Activated CD4-positive, alpha-beta memory T cell treated with anti-CD3 and anti-CD28 coated beads for 36 hours (primary cell): ENCODE measurements at regions of chr18 and their contacts with region 1.

Region 1: DNA sequence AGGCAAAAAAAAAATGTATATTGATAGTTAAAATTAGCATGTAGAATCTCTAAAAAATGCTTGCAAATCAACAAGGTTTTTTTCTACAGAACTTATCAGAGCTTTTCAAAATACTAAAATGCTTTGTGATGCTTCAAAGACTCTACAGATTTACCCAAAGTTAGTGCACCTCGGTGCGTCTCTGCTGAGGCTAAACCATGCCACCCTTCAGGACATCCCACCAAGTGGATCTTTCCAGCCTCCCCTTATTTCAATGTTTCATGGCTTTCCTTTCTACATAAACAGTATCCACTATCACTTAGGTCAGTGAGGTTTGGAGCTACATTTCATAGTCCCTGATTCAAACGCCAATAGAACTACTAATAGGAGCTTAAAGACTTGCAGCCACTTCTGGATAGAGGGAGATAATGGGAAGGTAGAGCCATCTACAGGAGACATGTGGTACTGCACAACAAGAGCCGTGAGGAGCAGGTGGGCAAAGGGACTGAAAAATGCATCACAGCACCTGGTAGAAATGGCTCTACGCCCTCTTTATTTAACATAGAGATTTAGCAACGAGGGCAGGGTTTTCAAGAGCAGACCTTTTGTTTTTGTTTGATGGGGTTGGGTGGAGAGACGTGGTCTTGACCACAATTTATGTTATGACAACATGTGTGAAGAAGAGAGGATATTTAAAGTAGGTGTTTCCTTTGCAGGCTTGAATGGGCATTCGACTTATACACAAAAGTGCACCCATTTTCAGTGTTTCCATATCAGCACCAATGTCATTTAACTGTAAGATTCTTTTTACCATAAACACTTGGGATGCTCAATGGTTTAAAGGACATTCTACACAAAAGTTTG is 56.1 kb upstream of the SLC35G4 start:
- DNase-seq: peak; percentile 36
- H3K4me3 Mint-ChIP-seq: no peak overlapping the region
- H3K27ac Mint-ChIP-seq: no peak overlapping the region
- H3K4me1 Mint-ChIP-seq: peaks cover 3% of the 10 kb centered on the region
- H3K27me3 Mint-ChIP-seq: peaks cover 4% of the 10 kb centered on the region

Region 2: DNA sequence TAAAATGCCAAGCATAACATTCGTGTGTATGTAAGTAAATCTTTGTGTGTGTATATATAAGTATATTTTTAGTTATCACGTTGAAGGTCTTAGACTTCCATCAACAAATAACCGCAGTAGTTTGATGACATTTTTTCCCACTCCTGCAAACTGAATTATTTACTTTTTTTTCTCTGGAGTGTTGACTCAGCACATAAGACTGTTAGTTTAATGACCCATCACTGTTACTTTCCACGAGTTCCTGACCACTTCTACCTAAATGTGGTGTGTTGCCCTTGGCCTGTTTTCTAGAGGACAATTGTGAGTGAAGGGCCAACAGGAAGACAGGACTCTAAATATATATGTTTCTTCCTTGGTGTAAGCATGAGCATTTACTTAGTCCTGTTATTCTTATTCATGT is 1738.9 kb before region 1 on chr18:
- CTCF ChIA-PET with region 1: no interaction called
- POLR2A ChIA-PET with region 1: no interaction called
- intact Hi-C with region 1: no loop called
- DNase-seq: no peak
- H3K4me3 Mint-ChIP-seq: no peak overlapping the region
- H3K27ac Mint-ChIP-seq: no peak overlapping the region
- H3K4me1 Mint-ChIP-seq: no peaks in the 10 kb centered on the region
- H3K27me3 Mint-ChIP-seq: peaks cover 13% of the 10 kb centered on the region

Region 3: GRCh38 chr18:10560450-10561045 is 992.8 kb before region 1 on chr18:
- CTCF ChIA-PET with region 1: interaction called, 5 read pairs
- POLR2A ChIA-PET with region 1: no interaction called
- intact Hi-C with region 1: loop called (anchors 5 kb)
- DNase-seq: peak; percentile 69
- H3K4me3 Mint-ChIP-seq: no peak overlapping the region
- H3K27ac Mint-ChIP-seq: no peak overlapping the region
- H3K4me1 Mint-ChIP-seq: peaks cover 4% of the 10 kb centered on the region
- H3K27me3 Mint-ChIP-seq: no peaks in the 10 kb centered on the region

Region 4: GRCh38 chr18:10787293-10787901 is 765.9 kb before region 1 on chr18:
- CTCF ChIA-PET with region 1: no interaction called
- POLR2A ChIA-PET with region 1: no interaction called
- intact Hi-C with region 1: loop called (anchors 5 kb)
- DNase-seq: peak; percentile 89
- H3K4me3 Mint-ChIP-seq: no peak overlapping the region
- H3K27ac Mint-ChIP-seq: no peak overlapping the region
- H3K4me1 Mint-ChIP-seq: peaks cover 2% of the 10 kb centered on the region
- H3K27me3 Mint-ChIP-seq: peaks cover 30% of the 10 kb centered on the region

Region 5: DNA sequence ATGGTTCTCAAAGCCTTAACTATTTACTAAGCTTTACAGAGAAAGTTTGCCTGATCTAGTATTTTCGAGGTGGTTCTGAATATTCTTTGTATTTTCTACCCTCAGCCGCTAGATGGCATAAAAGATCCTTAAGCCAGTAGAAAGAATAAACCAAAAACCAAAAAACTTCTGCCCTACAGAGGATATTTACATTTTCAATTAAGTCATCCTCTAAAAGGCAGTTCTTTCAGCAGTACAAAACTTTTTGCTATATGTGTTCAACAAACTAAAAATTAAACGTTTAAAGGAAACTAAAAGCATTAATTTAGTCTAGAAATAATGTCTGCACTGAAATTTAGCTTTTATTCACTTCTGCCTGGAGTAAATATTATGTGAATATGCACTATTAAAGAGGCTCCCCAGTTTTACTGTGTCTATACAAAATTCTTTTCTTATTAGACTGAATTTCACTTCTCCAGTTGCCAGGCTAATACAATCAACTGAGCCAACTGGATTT is 701.4 kb before region 1 on chr18:
- CTCF ChIA-PET with region 1: interaction called, 14 read pairs
- POLR2A ChIA-PET with region 1: no interaction called
- intact Hi-C with region 1: no loop called
- DNase-seq: no peak
- H3K4me3 Mint-ChIP-seq: no peak overlapping the region
- H3K27ac Mint-ChIP-seq: no peak overlapping the region
- H3K4me1 Mint-ChIP-seq: no peaks in the 10 kb centered on the region
- H3K27me3 Mint-ChIP-seq: peaks cover 11% of the 10 kb centered on the region

Region 6: GRCh38 chr18:11310476-11311086 is 242.7 kb before region 1 on chr18:
- CTCF ChIA-PET with region 1: interaction called, 11 read pairs
- POLR2A ChIA-PET with region 1: no interaction called
- intact Hi-C with region 1: loop called (anchors 5 kb)
- DNase-seq: peak; percentile 43
- H3K4me3 Mint-ChIP-seq: no peak overlapping the region
- H3K27ac Mint-ChIP-seq: no peak overlapping the region
- H3K4me1 Mint-ChIP-seq: no peaks in the 10 kb centered on the region
- H3K27me3 Mint-ChIP-seq: peaks cover 2% of the 10 kb centered on the region